ENCODE measurements at regions of chr1 and their contacts with region 1.

Region 1: DNA sequence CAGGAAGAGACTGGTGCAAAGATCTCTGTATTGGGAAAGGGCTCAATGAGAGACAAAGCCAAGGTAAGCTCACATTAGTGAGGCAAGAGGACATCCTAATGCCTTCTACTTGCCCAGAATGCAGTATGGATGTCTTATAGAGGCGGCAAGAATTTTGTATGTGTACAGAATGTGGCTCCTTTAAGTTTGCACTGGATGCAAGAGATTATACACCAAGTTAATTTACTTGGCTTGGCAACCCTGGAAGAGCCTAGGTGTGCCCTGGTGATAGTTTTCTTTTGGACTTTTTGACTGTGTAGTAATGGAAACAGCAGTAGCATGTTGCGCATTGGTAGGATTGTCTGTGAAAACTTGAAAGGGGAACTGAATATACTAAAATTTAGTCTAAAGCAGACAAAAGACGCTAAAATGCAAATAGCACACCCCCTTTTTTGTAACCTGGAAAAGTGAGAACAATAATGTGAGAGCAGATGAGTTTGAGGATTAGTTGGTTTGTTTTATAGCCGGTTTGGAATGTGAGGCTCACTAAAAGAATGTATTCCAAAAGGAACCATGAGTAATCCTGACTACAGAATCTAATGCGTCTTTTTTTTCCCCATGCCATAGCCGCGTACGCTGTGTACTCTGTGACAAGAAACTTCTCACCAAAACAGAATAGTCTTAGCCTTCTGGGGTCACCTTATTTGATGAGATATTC is 18.1 kb downstream of the KHDRBS1 start:
- DNase-seq: no peak
- ATAC-seq: no peak
- H3K4me3 ChIP-seq: no peak overlapping the region
- H3K27ac ChIP-seq: no peak overlapping the region
- H3K4me1 ChIP-seq: peaks cover 3% of the 10 kb centered on the region; the same call in 1 of the 2 replicates
- H3K27me3 ChIP-seq: no peaks in the 10 kb centered on the region
- CTCF ChIP-seq: no peak

Region 2: GRCh38 chr1:31944205-31945089 is 87.3 kb before region 1 on chr1:
- CTCF ChIA-PET with region 1: no interaction called
- POLR2A ChIA-PET with region 1: no interaction called
- in situ Hi-C with region 1: no loop called
- intact Hi-C with region 1: no loop called
- DNase-seq: no peak
- ATAC-seq: peak; percentile 90
- H3K4me3 ChIP-seq: peak overlapping the region; percentile 47 to 48
- H3K27ac ChIP-seq: peak overlapping the region; percentile 100
- H3K4me1 ChIP-seq: peaks cover 41% of the 10 kb centered on the region
- H3K27me3 ChIP-seq: no peaks in the 10 kb centered on the region
- CTCF ChIP-seq: no peak

Region 3: DNA sequence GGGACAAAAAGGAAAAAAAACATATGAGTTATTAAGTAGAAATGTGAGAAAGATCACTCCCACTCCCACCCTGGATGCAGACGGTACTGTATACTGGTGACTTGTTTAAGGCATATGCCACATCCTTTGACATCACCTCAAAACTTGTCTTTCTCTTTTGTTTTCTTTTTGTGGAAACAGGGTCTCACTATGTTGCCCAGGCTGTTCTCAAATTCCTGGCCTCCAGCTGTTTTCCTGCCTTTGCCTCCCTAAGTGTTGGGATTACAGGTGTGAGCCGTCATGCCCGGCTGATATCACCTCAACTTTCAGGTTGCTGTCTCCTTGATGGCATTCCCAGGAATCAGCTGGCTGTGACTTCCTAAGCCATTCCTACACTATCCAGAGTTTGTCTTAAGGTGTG is 36.5 kb before region 1 on chr1:
- CTCF ChIA-PET with region 1: no interaction called
- POLR2A ChIA-PET with region 1: no interaction called
- in situ Hi-C with region 1: no loop called
- intact Hi-C with region 1: no loop called
- DNase-seq: no peak
- ATAC-seq: no peak
- H3K4me3 ChIP-seq: no peak overlapping the region
- H3K27ac ChIP-seq: no peak overlapping the region
- H3K4me1 ChIP-seq: no peaks in the 10 kb centered on the region
- H3K27me3 ChIP-seq: no peaks in the 10 kb centered on the region
- CTCF ChIP-seq: no peak

Region 4: GRCh38 chr1:32013386-32014198 is 18.1 kb before region 1 on chr1 and contains the start of gene KHDRBS1:
- CTCF ChIA-PET with region 1: no interaction called
- POLR2A ChIA-PET with region 1: no interaction called
- in situ Hi-C with region 1: no loop called
- intact Hi-C with region 1: no loop called
- DNase-seq: peak; percentile 93
- ATAC-seq: peak; percentile 91
- H3K4me3 ChIP-seq: peak within 1 kb of the TSS; percentile 78 to 96
- H3K27ac ChIP-seq: peak within 1 kb of the TSS; percentile 99
- H3K4me1 ChIP-seq: peaks cover 11% of the 10 kb centered on the region
- H3K27me3 ChIP-seq: no peaks in the 10 kb centered on the region
- CTCF ChIP-seq: no peak
- total RNA-seq, gene KHDRBS1: 163 TPM

Region 5: DNA sequence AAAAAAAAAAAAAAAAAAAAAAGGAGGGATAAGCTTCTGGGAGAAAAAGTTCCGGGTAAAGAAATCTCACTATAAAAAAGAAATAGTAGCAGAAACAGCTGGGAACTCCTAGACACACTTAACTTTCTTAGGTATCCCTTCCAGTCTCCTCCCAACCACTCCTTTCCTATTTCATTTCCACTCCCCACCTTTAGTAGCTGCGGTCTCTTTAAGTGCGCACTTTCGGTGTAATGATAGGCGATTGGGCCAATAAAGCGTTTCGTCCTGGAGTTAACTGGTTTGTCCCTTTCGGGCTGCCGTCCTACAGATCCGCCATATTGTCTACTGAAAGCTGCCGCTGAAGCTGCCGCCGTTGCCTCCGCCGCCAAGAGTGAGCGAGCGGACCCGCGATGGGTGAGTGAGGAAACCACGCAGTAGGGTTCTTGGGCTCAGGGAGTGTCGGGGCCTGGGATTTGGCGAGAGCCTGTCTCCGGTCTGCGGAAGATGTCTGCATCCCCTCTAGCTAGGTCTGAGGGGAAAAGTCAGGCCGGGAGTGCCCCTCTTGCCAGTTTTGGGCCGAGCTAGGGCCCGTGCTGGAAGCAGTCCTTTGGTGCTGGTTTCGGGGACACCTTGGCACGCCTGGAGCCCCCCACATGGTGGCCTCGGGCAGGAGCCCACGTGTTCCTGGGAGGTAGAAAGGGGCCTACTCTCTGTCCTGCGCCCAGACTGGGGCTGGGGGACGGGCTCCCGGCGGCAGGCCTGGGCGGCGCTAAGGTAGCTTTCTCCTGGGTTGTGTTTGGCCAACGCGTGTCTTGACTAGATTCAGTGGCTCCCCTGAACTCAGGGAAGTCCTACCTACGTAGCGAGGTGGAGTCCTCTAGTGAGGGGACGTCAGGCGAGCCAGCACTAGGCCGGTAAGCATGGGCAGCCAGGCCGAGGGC is 76.3 kb after region 1 on chr1 and contains the start of gene KPNA6:
- CTCF ChIA-PET with region 1: interaction called, 15 read pairs
- POLR2A ChIA-PET with region 1: no interaction called
- in situ Hi-C with region 1: no loop called
- intact Hi-C with region 1: no loop called
- DNase-seq: peak; percentile 92
- ATAC-seq: peak; percentile 85
- H3K4me3 ChIP-seq: peak within 1 kb of the TSS; percentile 82 to 93
- H3K27ac ChIP-seq: peak within 1 kb of the TSS; percentile 94
- H3K4me1 ChIP-seq: peaks cover 19% of the 10 kb centered on the region; the same call in 1 of the 2 replicates
- H3K27me3 ChIP-seq: no peaks in the 10 kb centered on the region
- CTCF ChIP-seq: no peak
- total RNA-seq, gene KPNA6: 116 TPM

Region 6: GRCh38 chr1:32122151-32122550 is 90.4 kb after region 1 on chr1:
- CTCF ChIA-PET with region 1: no interaction called
- POLR2A ChIA-PET with region 1: no interaction called
- in situ Hi-C with region 1: no loop called
- intact Hi-C with region 1: no loop called
- DNase-seq: no peak
- ATAC-seq: no peak
- H3K4me3 ChIP-seq: no peak overlapping the region
- H3K27ac ChIP-seq: no peak overlapping the region
- H3K4me1 ChIP-seq: peaks cover 2% of the 10 kb centered on the region; the same call in 1 of the 2 replicates
- H3K27me3 ChIP-seq: no peaks in the 10 kb centered on the region
- CTCF ChIP-seq: no peak